Activated CD8-positive, alpha-beta T cell treated with anti-CD3 and anti-CD28 coated beads, Interleukin-2, amount 10 ng/mL, durations not matched to agents 7 days and 5 days (primary cell): ENCODE measurements at regions of chr14 and their contacts with region 1.

Region 1: DNA sequence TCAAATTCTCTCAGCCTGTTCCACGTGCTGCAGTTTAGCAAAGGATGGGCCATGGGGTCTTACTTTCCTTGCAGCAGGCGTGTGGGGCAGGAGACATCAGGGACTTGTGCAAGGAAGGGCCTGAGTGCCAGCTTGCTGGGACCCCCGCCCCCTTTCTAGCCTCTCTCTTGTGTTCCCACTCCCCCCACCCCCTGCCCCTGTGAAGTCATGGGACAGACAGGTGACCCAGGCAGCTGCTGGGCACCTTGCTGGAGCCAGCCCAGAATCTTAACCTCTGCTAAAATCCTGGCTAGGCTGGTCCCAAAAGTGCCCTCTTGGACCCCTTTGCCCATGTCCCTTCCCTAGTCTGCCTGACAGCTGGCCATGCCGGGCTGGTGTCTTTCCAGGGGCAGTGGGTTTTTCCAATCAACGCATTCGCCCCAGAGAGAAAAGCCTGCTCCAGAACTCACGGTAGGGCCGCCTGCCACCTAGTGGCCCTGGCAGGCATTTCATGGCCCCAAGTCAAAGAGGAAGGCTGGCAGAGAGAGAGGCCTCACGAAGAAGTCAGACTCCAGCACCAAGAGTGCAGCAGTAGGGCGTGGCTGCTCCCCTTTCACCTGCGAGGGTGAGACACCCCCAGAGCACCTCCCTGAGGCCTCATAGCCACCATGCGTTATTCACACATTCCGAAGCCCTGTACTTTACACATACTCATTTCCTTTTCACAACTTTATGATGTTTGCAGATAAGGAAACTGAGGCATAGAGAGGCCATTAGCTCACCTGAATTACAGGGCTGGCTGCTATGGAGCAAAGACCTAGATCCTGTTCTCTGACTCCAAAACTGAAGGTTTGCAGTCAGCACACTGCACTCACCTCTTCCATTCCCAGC is 67.4 kb downstream of the LGMN start:
- DNase-seq: peak; percentile 77
- ATAC-seq: peak; percentile 69
- H3K4me3 Mint-ChIP-seq: no peak overlapping the region
- H3K27ac Mint-ChIP-seq: peak overlapping the region; percentile 72
- H3K4me1 Mint-ChIP-seq: peaks cover 37% of the 10 kb centered on the region
- H3K27me3 Mint-ChIP-seq: no peaks in the 10 kb centered on the region

Region 2: GRCh38 chr14:92471919-92472318 is 209.1 kb before region 1 on chr14:
- CTCF ChIA-PET with region 1: no interaction called
- POLR2A ChIA-PET with region 1: no interaction called
- DNase-seq: no peak
- ATAC-seq: no peak
- H3K4me3 Mint-ChIP-seq: no peak overlapping the region
- H3K27ac Mint-ChIP-seq: no peak overlapping the region
- H3K4me1 Mint-ChIP-seq: peaks cover 6% of the 10 kb centered on the region
- H3K27me3 Mint-ChIP-seq: peaks cover 16% of the 10 kb centered on the region

Region 3: DNA sequence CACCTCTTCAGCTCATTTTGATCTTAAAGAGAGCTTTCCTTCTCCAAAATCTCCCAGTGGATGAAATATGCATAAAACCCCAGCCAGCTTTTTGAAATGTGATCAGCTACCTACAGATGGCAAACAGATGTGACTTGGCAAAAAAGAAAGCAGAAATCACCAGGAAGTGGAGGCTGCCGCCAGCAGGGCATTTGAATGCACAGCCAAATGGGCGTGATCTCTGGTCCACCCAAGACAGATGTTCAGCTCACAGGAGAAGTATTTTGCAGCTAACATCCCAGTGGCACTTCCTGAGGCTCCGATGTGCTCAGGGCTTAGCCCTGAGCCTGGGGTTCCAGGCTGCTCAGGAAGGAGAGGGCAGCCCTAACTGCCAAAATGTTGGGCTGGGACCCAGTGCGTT is 10.9 kb before region 1 on chr14:
- CTCF ChIA-PET with region 1: interaction called, 13 read pairs
- POLR2A ChIA-PET with region 1: no interaction called
- DNase-seq: no peak
- ATAC-seq: peak; percentile 5
- H3K4me3 Mint-ChIP-seq: no peak overlapping the region
- H3K27ac Mint-ChIP-seq: peak overlapping the region; percentile 45
- H3K4me1 Mint-ChIP-seq: peaks cover 69% of the 10 kb centered on the region
- H3K27me3 Mint-ChIP-seq: no peaks in the 10 kb centered on the region

Region 4: DNA sequence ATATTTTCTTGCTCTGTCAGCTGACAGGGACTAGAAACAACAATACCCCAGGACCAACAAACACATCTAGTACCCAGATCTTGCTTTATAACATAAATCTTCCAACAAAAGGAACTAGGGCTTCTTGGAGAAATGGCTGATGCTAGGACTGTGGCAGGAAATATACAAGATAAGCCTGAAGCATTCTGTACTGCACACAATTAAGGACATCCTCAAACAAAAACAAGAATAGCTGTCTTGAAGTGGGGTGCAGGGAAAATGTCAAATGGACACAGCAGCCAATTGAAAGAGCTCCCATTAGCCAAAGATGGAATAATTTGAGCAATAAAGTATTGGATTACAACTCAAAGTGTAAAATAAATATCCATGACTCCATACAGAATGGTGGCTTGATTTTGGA is 17.4 kb after region 1 on chr14:
- CTCF ChIA-PET with region 1: no interaction called
- POLR2A ChIA-PET with region 1: no interaction called
- DNase-seq: no peak
- ATAC-seq: no peak
- H3K4me3 Mint-ChIP-seq: no peak overlapping the region
- H3K27ac Mint-ChIP-seq: no peak overlapping the region
- H3K4me1 Mint-ChIP-seq: peaks cover under 1% of the 10 kb centered on the region
- H3K27me3 Mint-ChIP-seq: peaks cover 25% of the 10 kb centered on the region